ENCODE measurements at regions of chr6 and their contacts with region 1.

Region 1: GRCh38 chr6:155174576-155175211 is 89.1 kb upstream of the CLDN20 start:
- DNase-seq: peak in 8 of 9 donors; percentile 38 to 63 (median 54)
- ATAC-seq: peak; percentile 79
- H3K4me3 ChIP-seq: no peak overlapping the region
- H3K4me3 Mint-ChIP-seq: peak overlapping the region in 1 of 10 donors; percentile 19
- H3K27ac ChIP-seq: no peak overlapping the region
- H3K27ac Mint-ChIP-seq: peak overlapping the region in 2 of 9 donors; percentile 0 to 69
- H3K4me1 ChIP-seq: peaks cover 8 to 18% of the 10 kb centered on the region in 2 donors
- H3K4me1 Mint-ChIP-seq: peaks cover 8 to 44% (median 22%) of the 10 kb centered on the region in 7 donors
- H3K27me3 ChIP-seq: no peaks in the 10 kb centered on the region
- H3K27me3 Mint-ChIP-seq: no peaks in the 10 kb centered on the region

Region 2: DNA sequence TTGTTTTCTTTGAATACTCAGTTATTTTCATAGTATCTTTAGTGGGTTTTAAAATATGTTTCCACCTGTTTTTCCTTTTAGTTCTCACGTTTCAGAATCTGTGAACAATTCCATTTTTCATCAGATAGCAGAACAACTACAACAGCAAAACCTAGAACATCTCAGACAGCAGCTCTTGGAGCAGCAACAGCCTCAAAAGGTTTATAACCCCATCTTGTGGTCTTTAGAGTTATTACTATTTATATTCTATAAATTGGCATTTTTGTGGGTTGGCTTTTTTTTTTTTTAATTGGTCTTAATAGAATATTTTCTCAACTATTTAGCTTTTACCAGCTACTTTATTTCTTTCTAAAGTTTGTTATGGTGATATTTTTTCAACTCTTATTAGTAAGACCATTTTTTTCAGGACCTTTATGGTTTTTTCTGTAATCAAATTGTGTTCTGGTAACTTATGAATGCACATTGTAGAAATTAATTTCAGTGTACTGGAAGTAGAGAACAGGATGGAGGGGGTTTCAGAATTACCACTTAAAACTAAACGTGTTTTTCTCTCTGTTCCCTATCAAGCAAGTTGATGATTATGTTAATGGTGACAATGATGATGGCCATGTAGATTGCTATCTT is 369.3 kb before region 1 on chr6:
- CTCF ChIA-PET with region 1: no interaction called
- POLR2A ChIA-PET with region 1: no interaction called
- intact Hi-C with region 1: loop called in 1 of 2 experiments (anchors 1 kb)
- DNase-seq: peak in 7 of 9 donors; percentile 16 to 59 (median 44)
- ATAC-seq: peak; percentile 80
- H3K4me3 ChIP-seq: no peak overlapping the region
- H3K4me3 Mint-ChIP-seq: no peak overlapping the region
- H3K27ac ChIP-seq: no peak overlapping the region
- H3K27ac Mint-ChIP-seq: peak overlapping the region in 3 of 9 donors; percentile 26 to 66 (median 48)
- H3K4me1 ChIP-seq: no peaks in the 10 kb centered on the region
- H3K4me1 Mint-ChIP-seq: peaks cover 1 to 8% (median 5%) of the 10 kb centered on the region in 7 donors
- H3K27me3 ChIP-seq: no peaks in the 10 kb centered on the region
- H3K27me3 Mint-ChIP-seq: no peaks in the 10 kb centered on the region

Region 3: DNA sequence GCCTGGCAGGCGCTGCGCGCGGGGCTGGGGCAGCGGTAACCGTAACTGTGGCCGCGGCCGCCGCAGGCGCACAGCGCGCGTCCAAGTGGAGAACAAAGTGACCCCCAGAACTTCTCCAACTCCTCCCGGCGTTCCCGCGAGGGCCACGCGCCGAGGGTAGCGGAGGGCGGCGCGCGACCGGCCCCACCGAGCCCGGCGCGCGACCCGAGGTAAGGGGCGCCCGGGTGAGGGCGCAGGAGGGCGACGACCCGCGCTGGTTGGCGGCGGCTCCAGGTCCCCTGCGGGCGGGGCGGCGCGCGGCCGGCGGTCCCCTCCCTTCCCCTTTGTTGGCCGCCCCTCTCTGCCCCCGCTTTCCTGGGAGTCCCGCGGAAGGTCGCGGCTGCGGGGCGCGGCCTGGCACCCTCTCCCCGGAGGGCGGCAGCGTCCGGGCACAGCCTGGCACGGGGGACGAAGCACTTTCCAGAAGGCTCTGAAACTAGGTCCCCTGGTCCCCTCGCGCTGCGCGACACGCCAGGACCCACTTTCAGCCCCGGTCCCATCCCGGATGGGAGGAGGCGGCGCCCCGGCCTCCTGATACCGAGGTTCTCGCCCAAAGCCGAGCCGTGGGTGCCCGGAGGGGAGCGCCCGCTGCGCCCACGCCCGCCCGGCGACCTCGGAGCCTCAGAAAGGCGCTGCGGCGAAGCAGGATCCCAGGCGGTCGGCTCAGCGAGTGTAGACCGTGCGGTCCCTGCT is 179.2 kb before region 1 on chr6 and contains the start of gene TIAM2:
- CTCF ChIA-PET with region 1: no interaction called
- POLR2A ChIA-PET with region 1: no interaction called
- intact Hi-C with region 1: loop called in 1 of 2 experiments (anchors 5 kb)
- DNase-seq: peak in 1 of 9 donors; percentile 68
- ATAC-seq: no peak
- H3K4me3 ChIP-seq: no peak within 1 kb of the TSS
- H3K4me3 Mint-ChIP-seq: peak within 1 kb of the TSS in 7 of 10 donors; percentile 25 to 65 (median 46)
- H3K27ac ChIP-seq: no peak within 1 kb of the TSS
- H3K27ac Mint-ChIP-seq: no peak within 1 kb of the TSS
- H3K4me1 ChIP-seq: no peaks in the 10 kb centered on the region
- H3K4me1 Mint-ChIP-seq: peaks cover 0 to 13% (median 5%) of the 10 kb centered on the region in 7 donors
- H3K27me3 ChIP-seq: no peaks in the 10 kb centered on the region
- H3K27me3 Mint-ChIP-seq: peaks cover 27 to 40% (median 37%) of the 10 kb centered on the region in 5 donors
- total RNA-seq, gene TIAM2: 3.6 to 11.6 (median 8.6) TPM

Region 4: DNA sequence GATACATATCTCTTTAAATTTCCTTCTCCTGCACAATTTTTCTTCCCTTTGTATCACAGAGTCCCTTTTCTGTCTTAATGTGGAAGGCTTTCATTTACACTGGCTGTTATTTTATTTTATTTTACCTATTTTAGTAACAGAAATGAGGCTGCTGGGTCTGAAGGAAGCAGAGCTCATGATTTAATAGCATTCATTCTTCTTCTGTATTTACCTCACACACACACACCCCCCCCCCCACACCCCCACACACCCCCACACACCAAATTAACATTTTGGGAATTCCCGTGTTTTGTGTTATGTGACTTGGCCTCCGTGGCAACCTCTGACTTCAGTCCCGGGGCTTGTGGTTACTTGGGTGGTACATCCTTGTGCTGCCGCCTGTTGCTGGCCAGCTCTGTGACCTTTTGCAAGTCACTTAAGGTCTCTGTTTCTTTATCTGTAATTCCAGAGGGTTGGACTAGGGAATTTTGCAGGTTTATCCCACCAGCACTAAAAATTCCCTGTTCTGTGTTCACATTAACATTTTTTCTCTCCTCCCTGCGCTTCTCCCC is 70.8 kb before region 1 on chr6:
- CTCF ChIA-PET with region 1: no interaction called
- POLR2A ChIA-PET with region 1: no interaction called
- intact Hi-C with region 1: loop called in 1 of 2 experiments (anchors 1 kb)
- DNase-seq: peak in 1 of 9 donors; percentile 54
- ATAC-seq: no peak
- H3K4me3 ChIP-seq: no peak overlapping the region
- H3K4me3 Mint-ChIP-seq: no peak overlapping the region
- H3K27ac ChIP-seq: no peak overlapping the region
- H3K27ac Mint-ChIP-seq: no peak overlapping the region
- H3K4me1 ChIP-seq: no peaks in the 10 kb centered on the region
- H3K4me1 Mint-ChIP-seq: peaks cover 0 to 27% (median 0%) of the 10 kb centered on the region in 7 donors
- H3K27me3 ChIP-seq: no peaks in the 10 kb centered on the region
- H3K27me3 Mint-ChIP-seq: peaks cover 0 to 20% (median 9%) of the 10 kb centered on the region in 5 donors

Region 5: GRCh38 chr6:155212106-155212505 is 37.4 kb after region 1 on chr6:
- CTCF ChIA-PET with region 1: no interaction called
- POLR2A ChIA-PET with region 1: no interaction called
- intact Hi-C with region 1: no loop called
- DNase-seq: no peak
- ATAC-seq: no peak
- H3K4me3 ChIP-seq: no peak overlapping the region
- H3K4me3 Mint-ChIP-seq: no peak overlapping the region
- H3K27ac ChIP-seq: no peak overlapping the region
- H3K27ac Mint-ChIP-seq: no peak overlapping the region
- H3K4me1 ChIP-seq: no peaks in the 10 kb centered on the region
- H3K4me1 Mint-ChIP-seq: no peaks in the 10 kb centered on the region
- H3K27me3 ChIP-seq: no peaks in the 10 kb centered on the region
- H3K27me3 Mint-ChIP-seq: peaks cover 4 to 10% (median 6%) of the 10 kb centered on the region in 5 donors

Region 6: GRCh38 chr6:155248008-155249001 is 73.6 kb after region 1 on chr6:
- CTCF ChIA-PET with region 1: no interaction called
- POLR2A ChIA-PET with region 1: no interaction called
- intact Hi-C with region 1: loop called (anchors 1 to 5 kb)
- DNase-seq: no peak
- ATAC-seq: peak; percentile 41
- H3K4me3 ChIP-seq: no peak overlapping the region
- H3K4me3 Mint-ChIP-seq: no peak overlapping the region
- H3K27ac ChIP-seq: no peak overlapping the region
- H3K27ac Mint-ChIP-seq: peak overlapping the region in 3 of 9 donors; percentile 11 to 28 (median 24)
- H3K4me1 ChIP-seq: no peaks in the 10 kb centered on the region
- H3K4me1 Mint-ChIP-seq: no peaks in the 10 kb centered on the region
- H3K27me3 ChIP-seq: no peaks in the 10 kb centered on the region
- H3K27me3 Mint-ChIP-seq: no peaks in the 10 kb centered on the region

Region 7: GRCh38 chr6:155314092-155314772 is 139.5 kb after region 1 on chr6 and contains the start of gene TFB1M:
- CTCF ChIA-PET with region 1: interaction called, 11 read pairs
- POLR2A ChIA-PET with region 1: no interaction called
- intact Hi-C with region 1: loop called (anchors 1 kb)
- DNase-seq: peak; percentile 84 to 98 (median 94)
- ATAC-seq: peak; percentile 96
- H3K4me3 ChIP-seq: peak within 1 kb of the TSS; percentile 86
- H3K4me3 Mint-ChIP-seq: peak within 1 kb of the TSS; percentile 80 to 98 (median 96)
- H3K27ac ChIP-seq: peak within 1 kb of the TSS; percentile 90
- H3K27ac Mint-ChIP-seq: peak within 1 kb of the TSS; percentile 84 to 97 (median 93)
- H3K4me1 ChIP-seq: peaks cover 3 to 5% of the 10 kb centered on the region in 2 donors
- H3K4me1 Mint-ChIP-seq: peaks cover 10 to 48% (median 41%) of the 10 kb centered on the region in 7 donors
- H3K27me3 ChIP-seq: no peaks in the 10 kb centered on the region
- H3K27me3 Mint-ChIP-seq: no peaks in the 10 kb centered on the region
- total RNA-seq, gene TFB1M: 20.5 to 45.4 (median 29.7) TPM

Region 8: GRCh38 chr6:156080371-156080770 is 905.7 kb after region 1 on chr6:
- CTCF ChIA-PET with region 1: no interaction called
- POLR2A ChIA-PET with region 1: no interaction called
- intact Hi-C with region 1: no loop called
- DNase-seq: no peak
- ATAC-seq: no peak
- H3K4me3 ChIP-seq: no peak overlapping the region
- H3K4me3 Mint-ChIP-seq: no peak overlapping the region
- H3K27ac ChIP-seq: no peak overlapping the region
- H3K27ac Mint-ChIP-seq: no peak overlapping the region
- H3K4me1 ChIP-seq: no peaks in the 10 kb centered on the region
- H3K4me1 Mint-ChIP-seq: peaks cover 0 to 14% (median 0%) of the 10 kb centered on the region in 7 donors
- H3K27me3 ChIP-seq: no peaks in the 10 kb centered on the region
- H3K27me3 Mint-ChIP-seq: no peaks in the 10 kb centered on the region